Sciatic nerve (tissue), 2 donors: ENCODE measurements at regions of chr1 and their contacts with region 1.

Region 1: GRCh38 chr1:53182111-53182593 is 14.5 kb upstream of the CPT2 start:
- DNase-seq: peak; percentile 93
- ATAC-seq: peak; percentile 69

Region 2: DNA sequence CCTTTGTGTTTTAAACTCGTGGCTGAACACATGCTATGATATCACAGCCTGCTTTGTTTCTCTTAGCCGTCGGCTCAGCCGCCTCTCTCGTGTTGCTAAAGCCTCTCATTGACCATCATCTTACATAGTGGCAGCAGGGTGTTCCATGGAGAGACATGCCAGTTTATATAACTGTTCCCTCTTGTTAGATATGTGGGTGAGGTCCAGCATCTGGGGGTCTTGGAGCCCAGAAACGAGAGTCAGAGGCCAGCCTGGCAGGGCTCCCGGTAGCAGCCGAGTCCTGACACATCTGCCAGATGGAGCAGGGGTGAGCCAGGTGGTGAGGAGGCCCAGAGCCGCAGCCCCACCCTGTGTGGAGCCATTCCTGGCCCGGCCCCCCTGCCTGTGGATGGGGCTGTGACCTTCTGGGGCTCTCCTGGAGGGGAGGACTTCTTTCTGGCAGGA is 108.3 kb before region 1 on chr1:
- intact Hi-C with region 1: loop called (anchors 10 kb)
- DNase-seq: peak; percentile 77
- ATAC-seq: peak; percentile 80

Region 3: DNA sequence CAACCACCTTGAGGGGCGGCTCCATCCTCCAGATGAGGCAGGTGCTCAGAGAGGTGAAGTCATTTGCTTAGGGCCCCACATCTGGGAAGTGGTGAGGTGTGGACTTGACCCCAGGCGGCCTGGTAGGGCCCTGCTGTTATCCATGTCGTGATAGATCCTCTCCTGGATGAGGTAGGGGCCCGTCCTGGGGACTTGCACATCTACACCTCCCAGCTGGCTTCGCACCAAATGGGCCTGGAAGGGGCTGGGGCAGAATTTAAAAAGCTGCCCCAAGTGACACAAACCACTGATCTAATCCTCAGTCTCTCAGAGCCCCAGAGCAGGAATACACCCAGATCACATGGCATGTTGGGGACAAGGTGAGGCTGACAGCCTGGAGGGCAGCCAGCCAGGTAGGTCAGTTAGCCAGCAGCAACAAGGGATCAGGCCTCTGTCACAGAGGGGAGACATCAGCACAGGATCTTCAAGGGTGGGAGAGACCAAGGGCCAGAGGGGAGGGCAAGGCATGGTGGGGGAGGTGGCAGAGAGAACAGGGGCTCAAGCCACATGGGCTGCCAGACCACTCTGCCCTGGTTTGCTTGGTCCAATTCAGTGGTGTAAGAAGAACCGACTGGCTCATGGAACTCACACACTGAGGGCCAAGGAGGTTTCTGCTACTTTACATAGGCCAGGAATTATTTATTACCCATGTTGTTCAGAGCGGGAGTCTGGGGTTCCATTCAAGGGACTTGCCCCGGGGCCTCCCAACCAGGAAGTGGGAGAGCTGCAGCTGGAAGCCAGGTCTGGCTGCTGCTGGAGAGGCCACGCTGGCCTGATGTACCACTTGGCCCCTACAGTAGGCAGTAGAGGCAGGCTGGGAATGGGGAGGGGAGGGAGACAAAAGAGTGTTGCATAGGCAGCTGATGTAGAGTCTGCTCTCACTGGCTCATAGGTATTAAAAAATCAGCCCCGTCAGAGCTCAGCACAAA is 133.6 kb after region 1 on chr1:
- intact Hi-C with region 1: no loop called
- DNase-seq: no peak
- ATAC-seq: no peak